ENCODE measurements at regions of chrX and their contacts with region 1.

Region 1: DNA sequence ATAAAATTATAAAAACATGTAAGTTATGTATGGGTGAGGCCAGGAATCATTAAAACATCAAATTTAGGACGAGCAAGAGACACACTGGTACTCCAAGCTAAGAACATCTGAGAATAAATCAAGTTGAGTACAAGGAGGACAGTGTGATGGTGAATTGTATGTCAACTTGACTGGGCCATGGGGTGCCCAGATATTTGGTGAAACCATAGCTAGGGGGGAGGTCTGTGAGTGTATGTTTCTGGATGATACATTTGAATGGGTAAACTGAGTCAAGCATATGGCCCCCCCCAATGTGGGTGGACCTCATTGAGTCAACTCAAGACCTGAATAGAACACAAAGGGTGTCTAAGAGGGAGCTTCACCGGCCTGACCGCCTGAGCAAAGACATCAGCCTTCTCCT is 115.3 kb upstream of the BCOR start:
- DNase-seq: no peak
- ATAC-seq: no peak
- H3K4me3 ChIP-seq: no peak overlapping the region
- H3K27ac ChIP-seq: no peak overlapping the region
- H3K4me1 ChIP-seq: no peaks in the 10 kb centered on the region
- H3K27me3 ChIP-seq: no peaks in the 10 kb centered on the region
- CTCF ChIP-seq: no peak

Region 2: GRCh38 chrX:40176351-40177116 is 36.6 kb before region 1 on chrX:
- CTCF ChIA-PET with region 1: no interaction called
- POLR2A ChIA-PET with region 1: interaction called, 13 read pairs
- in situ Hi-C with region 1: no loop called
- intact Hi-C with region 1: no loop called
- DNase-seq: no peak
- ATAC-seq: peak; percentile 24; the same call in 1 of the 2 replicates
- H3K4me3 ChIP-seq: peak overlapping the region; percentile 42 to 56
- H3K27ac ChIP-seq: peak overlapping the region; percentile 80
- H3K4me1 ChIP-seq: no peaks in the 10 kb centered on the region; the same call in none of the 2 replicates
- H3K27me3 ChIP-seq: no peaks in the 10 kb centered on the region
- CTCF ChIP-seq: no peak

Region 3: GRCh38 chrX:40266490-40267333 is 53.6 kb after region 1 on chrX:
- CTCF ChIA-PET with region 1: interaction called, 4 read pairs
- POLR2A ChIA-PET with region 1: interaction called, 12 read pairs
- in situ Hi-C with region 1: no loop called
- intact Hi-C with region 1: no loop called
- DNase-seq: no peak
- ATAC-seq: peak; percentile 96
- H3K4me3 ChIP-seq: peak overlapping the region; percentile 39 to 53
- H3K27ac ChIP-seq: peak overlapping the region; percentile 61
- H3K4me1 ChIP-seq: peaks cover 4% of the 10 kb centered on the region
- H3K27me3 ChIP-seq: no peaks in the 10 kb centered on the region
- CTCF ChIP-seq: peak; percentile 85

Region 4: GRCh38 chrX:40570346-40571093 is 357.4 kb after region 1 on chrX:
- CTCF ChIA-PET with region 1: no interaction called
- POLR2A ChIA-PET with region 1: no interaction called
- in situ Hi-C with region 1: no loop called
- intact Hi-C with region 1: no loop called
- DNase-seq: no peak
- ATAC-seq: no peak
- H3K4me3 ChIP-seq: no peak overlapping the region
- H3K27ac ChIP-seq: no peak overlapping the region
- H3K4me1 ChIP-seq: no peaks in the 10 kb centered on the region
- H3K27me3 ChIP-seq: no peaks in the 10 kb centered on the region
- CTCF ChIP-seq: no peak

Region 5: GRCh38 chrX:41384041-41384705 is 1171.1 kb after region 1 on chrX:
- CTCF ChIA-PET with region 1: no interaction called
- POLR2A ChIA-PET with region 1: interaction called, 11 read pairs
- in situ Hi-C with region 1: no loop called
- intact Hi-C with region 1: no loop called
- DNase-seq: no peak
- ATAC-seq: no peak
- H3K4me3 ChIP-seq: no peak overlapping the region
- H3K27ac ChIP-seq: no peak overlapping the region; the same call in 1 of the 2 replicates
- H3K4me1 ChIP-seq: peaks cover 4% of the 10 kb centered on the region
- H3K27me3 ChIP-seq: no peaks in the 10 kb centered on the region
- CTCF ChIP-seq: no peak